ENCODE measurements at regions of chr19 and their contacts with region 1.

Region 1: DNA sequence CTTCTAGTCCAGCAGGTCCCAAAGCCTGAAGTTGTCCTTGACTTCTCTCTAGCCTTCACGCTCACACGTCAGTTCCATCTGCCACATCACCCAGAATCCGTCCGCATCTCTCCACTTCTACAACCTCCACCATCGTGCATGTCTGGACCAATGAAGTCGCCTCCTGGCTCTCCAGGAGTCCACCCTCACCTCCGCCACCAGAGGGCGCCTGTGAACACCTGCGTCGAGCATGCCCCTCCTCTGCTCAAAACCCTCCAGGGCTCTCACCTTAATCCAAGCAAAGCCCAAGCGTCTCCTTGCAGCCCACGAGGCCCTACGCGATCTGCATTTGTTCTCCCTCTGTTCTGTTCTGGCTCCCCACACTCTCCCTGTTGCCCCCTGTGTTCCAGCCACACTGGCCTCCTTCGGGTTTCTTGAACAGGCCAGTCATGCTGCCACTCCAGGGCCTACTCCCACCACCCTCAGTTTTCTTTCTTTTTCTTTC is 3.7 kb downstream of the USHBP1 start:
- DNase-seq: peak; percentile 93
- H3K4me3 Mint-ChIP-seq: no peak overlapping the region
- H3K27ac Mint-ChIP-seq: no peak overlapping the region
- H3K4me1 Mint-ChIP-seq: peaks cover 17% of the 10 kb centered on the region
- H3K27me3 Mint-ChIP-seq: no peaks in the 10 kb centered on the region

Region 2: GRCh38 chr19:17183858-17184321 is 77.0 kb before region 1 on chr19:
- CTCF ChIA-PET with region 1: no interaction called
- POLR2A ChIA-PET with region 1: no interaction called
- DNase-seq: peak; percentile 31
- H3K4me3 Mint-ChIP-seq: peak overlapping the region; percentile 74
- H3K27ac Mint-ChIP-seq: peak overlapping the region; percentile 98
- H3K4me1 Mint-ChIP-seq: peaks cover 42% of the 10 kb centered on the region
- H3K27me3 Mint-ChIP-seq: no peaks in the 10 kb centered on the region

Region 3: DNA sequence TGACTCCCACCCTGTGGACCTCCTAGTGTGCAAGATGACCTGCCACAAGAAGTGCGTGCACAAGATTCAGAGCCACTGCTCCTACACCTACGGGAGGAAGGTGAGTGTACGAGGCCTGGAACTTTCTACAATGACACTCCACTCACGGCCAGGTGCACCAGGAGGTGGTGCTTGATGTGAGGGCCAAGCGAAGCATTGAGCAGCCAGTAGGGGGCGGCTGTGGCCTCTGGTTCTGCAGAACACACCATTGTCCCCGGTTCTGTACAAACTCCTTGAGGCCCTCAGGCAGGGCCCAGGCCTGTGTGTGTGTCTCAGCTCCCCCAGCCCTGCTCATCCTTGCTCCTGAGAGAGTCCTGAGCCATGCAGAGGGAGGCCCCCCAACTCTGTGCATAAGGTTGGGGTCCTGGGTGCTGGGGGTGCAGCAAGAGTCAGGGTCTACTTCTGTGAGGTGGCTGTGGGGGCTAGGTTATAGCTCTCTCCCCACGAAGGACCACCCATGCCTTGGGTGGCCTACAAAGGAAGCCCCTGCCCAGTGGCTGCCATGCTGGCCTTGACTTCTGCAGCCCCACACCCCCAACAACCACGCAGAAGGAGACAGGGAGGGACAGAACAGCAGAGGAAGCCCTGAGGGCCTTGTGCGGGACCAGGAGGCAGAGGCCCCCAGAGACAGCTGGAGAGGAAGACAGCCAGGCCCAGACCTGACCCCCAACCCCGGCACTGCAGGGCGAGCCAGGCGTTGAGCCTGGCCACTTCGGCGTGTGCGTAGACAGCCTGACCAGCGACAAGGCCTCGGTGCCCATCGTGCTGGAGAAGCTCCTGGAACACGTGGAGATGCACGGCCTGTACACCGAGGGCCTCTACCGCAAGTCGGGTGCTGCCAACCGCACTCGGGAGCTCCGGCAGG is 55.4 kb before region 1 on chr19:
- CTCF ChIA-PET with region 1: no interaction called
- POLR2A ChIA-PET with region 1: no interaction called
- DNase-seq: peak; percentile 69
- H3K4me3 Mint-ChIP-seq: no peak overlapping the region
- H3K27ac Mint-ChIP-seq: no peak overlapping the region
- H3K4me1 Mint-ChIP-seq: peaks cover 15% of the 10 kb centered on the region
- H3K27me3 Mint-ChIP-seq: no peaks in the 10 kb centered on the region

Region 4: DNA sequence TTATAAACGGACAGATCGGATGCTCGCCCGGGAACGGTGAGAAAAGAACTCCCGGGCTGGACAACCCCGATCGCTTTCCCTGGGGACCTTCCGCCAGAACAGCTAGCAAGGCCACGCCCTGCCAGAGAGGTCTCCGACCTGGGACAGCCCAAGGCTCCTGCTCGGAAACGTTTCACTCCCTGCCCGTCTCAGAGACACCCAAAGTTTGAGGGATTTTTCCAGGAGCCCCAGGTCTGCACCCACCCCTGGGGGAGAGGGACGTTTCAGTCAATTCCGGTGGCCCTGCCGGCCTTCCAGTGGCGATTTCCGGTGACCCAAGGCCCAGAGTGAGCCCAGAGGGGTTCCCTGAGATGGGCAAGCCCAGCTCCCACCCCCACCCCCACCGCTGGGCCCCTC is 16.9 kb before region 1 on chr19:
- CTCF ChIA-PET with region 1: interaction called, 17 read pairs
- POLR2A ChIA-PET with region 1: no interaction called
- DNase-seq: no peak
- H3K4me3 Mint-ChIP-seq: peak overlapping the region; percentile 48
- H3K27ac Mint-ChIP-seq: no peak overlapping the region
- H3K4me1 Mint-ChIP-seq: peaks cover 7% of the 10 kb centered on the region
- H3K27me3 Mint-ChIP-seq: peaks cover 21% of the 10 kb centered on the region

Region 5: GRCh38 chr19:17325897-17326598 is 65.2 kb after region 1 on chr19:
- CTCF ChIA-PET with region 1: no interaction called
- POLR2A ChIA-PET with region 1: no interaction called
- DNase-seq: no peak
- H3K4me3 Mint-ChIP-seq: no peak overlapping the region
- H3K27ac Mint-ChIP-seq: no peak overlapping the region
- H3K4me1 Mint-ChIP-seq: peaks cover 15% of the 10 kb centered on the region
- H3K27me3 Mint-ChIP-seq: peaks cover 13% of the 10 kb centered on the region

Measured in activated CD4-positive, alpha-beta T cell treated with anti-CD3 and anti-CD28 coated beads, Interleukin-2, amount 10 ng/mL, durations not matched to agents 7 days and 5 days (primary cell).